SK-N-SH (cell line): ENCODE measurements at regions of chr17 and their contacts with region 1.

Region 1: GRCh38 chr17:15502369-15503112 is 35.1 kb upstream of the CDRT4 start:
- DNase-seq: peak; percentile 89
- H3K4me3 ChIP-seq: peak overlapping the region in 1 of 2 experiments; percentile 20; a peak in 1 of 4 replicates
- H3K27ac ChIP-seq: peak overlapping the region in 1 of 2 experiments; percentile 25; a peak in 1 of 4 replicates
- H3K4me1 ChIP-seq: peaks cover 2 to 5% of the 10 kb centered on the region in 2 experiments; a peak in 1 of 4 replicates
- H3K27me3 ChIP-seq: no peaks in the 10 kb centered on the region
- CTCF ChIP-seq: peak; percentile 95
- EP300 ChIP-seq: no peak
- RAD21 ChIP-seq: peak; percentile 90

Region 2: GRCh38 chr17:15247891-15248529 is 254.5 kb before region 1 on chr17:
- CTCF ChIA-PET with region 1: interaction called, 35 read pairs
- POLR2A ChIA-PET with region 1: no interaction called
- DNase-seq: no peak
- H3K4me3 ChIP-seq: no peak overlapping the region
- H3K27ac ChIP-seq: no peak overlapping the region
- H3K4me1 ChIP-seq: no peaks in the 10 kb centered on the region; a peak in 1 of 4 replicates
- H3K27me3 ChIP-seq: no peaks in the 10 kb centered on the region
- CTCF ChIP-seq: peak; percentile 42
- EP300 ChIP-seq: no peak
- RAD21 ChIP-seq: peak; percentile 48

Region 3: DNA sequence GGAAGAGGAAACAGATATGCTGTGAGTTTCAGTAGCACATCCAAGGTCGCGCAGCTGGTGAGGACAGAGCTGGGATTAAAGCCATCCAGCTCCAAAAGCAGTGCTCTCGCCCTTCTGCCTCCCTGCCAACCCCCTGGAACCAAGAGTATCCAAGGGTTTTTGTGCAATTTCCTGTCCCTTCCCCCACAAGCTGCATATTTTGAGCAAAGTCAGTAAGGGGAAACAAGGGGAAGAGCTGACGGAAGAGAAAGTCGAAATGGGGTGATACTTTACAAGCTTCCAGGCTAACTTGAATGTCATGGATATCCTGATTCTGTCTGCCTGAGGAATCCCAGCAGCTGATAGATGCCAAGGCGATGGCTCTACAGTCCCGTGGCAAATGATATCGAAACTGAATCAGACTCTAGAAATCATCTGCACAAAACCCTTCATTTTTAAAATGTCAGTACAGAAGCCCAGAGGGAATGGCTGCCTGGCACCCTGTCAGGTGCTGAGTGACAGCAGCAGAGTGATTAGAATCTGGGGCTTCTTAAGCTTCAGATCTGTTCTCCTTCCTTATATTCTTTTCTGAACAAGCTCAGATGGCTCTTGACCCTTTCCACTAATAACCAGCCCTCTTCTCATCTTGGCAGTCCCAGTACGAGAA is 118.3 kb before region 1 on chr17:
- CTCF ChIA-PET with region 1: interaction called, 10 read pairs
- POLR2A ChIA-PET with region 1: no interaction called
- DNase-seq: no peak
- H3K4me3 ChIP-seq: peak overlapping the region; percentile 17 to 33
- H3K27ac ChIP-seq: peak overlapping the region in 1 of 2 experiments; percentile 76; a peak in 2 of 4 replicates
- H3K4me1 ChIP-seq: peaks cover 0 to 10% of the 10 kb centered on the region in 2 experiments; a peak in 2 of 4 replicates
- H3K27me3 ChIP-seq: no peaks in the 10 kb centered on the region
- CTCF ChIP-seq: no peak
- EP300 ChIP-seq: no peak
- RAD21 ChIP-seq: no peak

Region 4: GRCh38 chr17:15436473-15437302 is 65.9 kb before region 1 on chr17:
- CTCF ChIA-PET with region 1: interaction called, 14 read pairs
- POLR2A ChIA-PET with region 1: no interaction called
- DNase-seq: no peak
- H3K4me3 ChIP-seq: no peak overlapping the region
- H3K27ac ChIP-seq: no peak overlapping the region
- H3K4me1 ChIP-seq: peaks cover 0 to 8% of the 10 kb centered on the region in 2 experiments; a peak in 1 of 4 replicates
- H3K27me3 ChIP-seq: no peaks in the 10 kb centered on the region
- CTCF ChIP-seq: peak; percentile 37
- EP300 ChIP-seq: no peak
- RAD21 ChIP-seq: no peak

Region 5: GRCh38 chr17:15475631-15476354 is 26.7 kb before region 1 on chr17:
- CTCF ChIA-PET with region 1: interaction called, 17 read pairs
- POLR2A ChIA-PET with region 1: no interaction called
- DNase-seq: no peak
- H3K4me3 ChIP-seq: no peak overlapping the region
- H3K27ac ChIP-seq: no peak overlapping the region
- H3K4me1 ChIP-seq: peaks cover 10% of the 10 kb centered on the region in 2 experiments; a peak in 3 of 4 replicates
- H3K27me3 ChIP-seq: no peaks in the 10 kb centered on the region
- CTCF ChIP-seq: no peak
- EP300 ChIP-seq: no peak
- RAD21 ChIP-seq: no peak

Region 6: DNA sequence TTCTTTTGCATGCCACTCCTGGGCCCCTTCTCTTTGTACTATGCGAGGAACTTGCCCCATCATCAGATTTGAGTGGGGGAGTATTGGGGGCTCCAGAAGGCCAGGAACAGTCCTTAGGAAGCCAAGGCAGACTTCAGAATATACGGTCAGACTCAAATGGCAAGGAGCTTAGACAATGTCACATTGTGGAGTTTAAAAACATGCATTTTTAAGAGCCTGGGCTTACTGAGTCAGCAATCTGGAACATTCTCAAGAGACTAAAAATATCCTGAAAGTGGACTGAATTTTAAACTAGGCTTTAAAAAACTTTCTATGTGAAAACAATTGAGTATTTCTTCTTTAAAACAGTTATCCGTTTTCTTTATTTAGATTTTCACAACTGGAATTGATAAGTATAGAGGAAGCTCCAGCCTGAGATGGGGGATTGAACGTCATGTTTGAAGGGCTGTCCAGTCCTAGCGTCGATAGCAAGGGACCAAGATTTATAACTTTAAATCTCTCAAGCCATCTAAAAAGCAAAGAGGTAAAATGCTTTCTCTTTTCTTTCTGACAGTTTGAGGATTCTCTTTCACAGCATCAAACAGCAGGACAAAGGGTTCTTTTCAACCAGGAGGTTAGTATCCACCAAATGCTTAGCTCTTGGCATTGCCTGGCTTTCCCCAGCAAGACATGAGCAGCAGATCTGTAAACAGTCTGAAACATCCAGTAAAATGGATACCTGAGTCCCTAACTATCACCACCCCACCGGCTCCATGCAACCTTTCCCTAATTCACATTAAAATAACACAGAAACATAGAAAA is 10.7 kb after region 1 on chr17:
- CTCF ChIA-PET with region 1: interaction called, 19 read pairs
- POLR2A ChIA-PET with region 1: no interaction called
- DNase-seq: no peak
- H3K4me3 ChIP-seq: no peak overlapping the region
- H3K27ac ChIP-seq: peak overlapping the region in 1 of 2 experiments; percentile 45; a peak in 1 of 4 replicates
- H3K4me1 ChIP-seq: 0 out of 4 replicates have a peak, but pooled peaks cover 0 to 6% of the 10 kb centered on the region in 2 experiments
- H3K27me3 ChIP-seq: no peaks in the 10 kb centered on the region
- CTCF ChIP-seq: no peak
- EP300 ChIP-seq: no peak
- RAD21 ChIP-seq: no peak

Region 7: GRCh38 chr17:15742051-15742795 is 239.7 kb after region 1 on chr17:
- CTCF ChIA-PET with region 1: no interaction called
- POLR2A ChIA-PET with region 1: no interaction called
- DNase-seq: no peak
- H3K4me3 ChIP-seq: no peak overlapping the region
- H3K27ac ChIP-seq: no peak overlapping the region
- H3K4me1 ChIP-seq: peaks cover 0 to 15% of the 10 kb centered on the region in 2 experiments; a peak in 1 of 4 replicates
- H3K27me3 ChIP-seq: no peaks in the 10 kb centered on the region; the same call in 1 of the 2 replicates
- CTCF ChIP-seq: no peak
- EP300 ChIP-seq: no peak
- RAD21 ChIP-seq: no peak

Region 8: DNA sequence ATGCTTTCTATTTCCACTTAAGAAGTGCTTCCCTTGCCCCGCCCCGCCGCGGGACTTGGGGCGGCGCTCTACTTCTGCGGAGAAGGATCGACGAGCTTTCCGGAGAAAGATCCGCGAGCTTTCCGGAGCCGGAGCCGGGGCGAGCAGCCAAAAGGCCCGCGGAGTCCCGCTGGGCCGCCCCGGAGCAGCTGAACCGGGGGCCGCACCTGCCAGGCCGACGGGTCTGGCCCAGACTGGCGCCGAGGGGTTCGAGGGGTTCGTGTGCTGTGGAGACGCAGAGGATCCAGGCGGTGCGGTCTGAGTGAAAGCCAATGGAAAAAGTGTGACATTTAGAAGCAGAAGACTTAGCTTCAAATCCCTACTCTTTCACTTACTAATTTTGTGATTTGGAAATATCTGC is 280.3 kb after region 1 on chr17:
- CTCF ChIA-PET with region 1: no interaction called
- POLR2A ChIA-PET with region 1: no interaction called
- DNase-seq: no peak
- H3K4me3 ChIP-seq: no peak overlapping the region
- H3K27ac ChIP-seq: no peak overlapping the region
- H3K4me1 ChIP-seq: peaks cover 0 to 3% of the 10 kb centered on the region in 2 experiments; a peak in 1 of 4 replicates
- H3K27me3 ChIP-seq: no peaks in the 10 kb centered on the region
- CTCF ChIP-seq: no peak
- EP300 ChIP-seq: no peak
- RAD21 ChIP-seq: no peak